ENCODE measurements at regions of chr17 and their contacts with region 1.

Region 1: DNA sequence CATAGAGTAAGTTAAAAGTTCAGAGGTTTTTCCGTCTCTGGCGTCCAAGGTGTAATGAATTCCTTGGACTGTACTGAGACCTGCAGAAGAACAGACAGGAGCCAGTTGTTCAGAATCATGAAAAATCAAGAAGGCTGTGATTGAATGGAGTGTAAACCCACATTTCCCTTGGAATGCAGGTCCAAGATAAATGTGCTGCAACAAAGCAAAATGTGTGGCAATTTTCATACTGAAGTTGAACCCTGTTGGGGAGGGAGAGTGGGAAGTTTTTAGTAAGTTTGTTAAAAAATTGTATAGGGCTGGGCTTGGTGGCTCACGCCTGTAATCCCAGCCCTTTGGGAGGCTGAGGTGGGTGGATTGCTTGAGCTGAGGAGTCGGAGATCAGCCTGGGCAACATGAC is 21.4 kb downstream of the GGNBP2 start:
- DNase-seq: no peak
- H3K4me3 Mint-ChIP-seq: no peak overlapping the region
- H3K27ac Mint-ChIP-seq: peak overlapping the region; percentile 27
- H3K4me1 Mint-ChIP-seq: no peaks in the 10 kb centered on the region
- H3K27me3 Mint-ChIP-seq: no peaks in the 10 kb centered on the region
- CTCF ChIP-seq: no peak

Region 2: DNA sequence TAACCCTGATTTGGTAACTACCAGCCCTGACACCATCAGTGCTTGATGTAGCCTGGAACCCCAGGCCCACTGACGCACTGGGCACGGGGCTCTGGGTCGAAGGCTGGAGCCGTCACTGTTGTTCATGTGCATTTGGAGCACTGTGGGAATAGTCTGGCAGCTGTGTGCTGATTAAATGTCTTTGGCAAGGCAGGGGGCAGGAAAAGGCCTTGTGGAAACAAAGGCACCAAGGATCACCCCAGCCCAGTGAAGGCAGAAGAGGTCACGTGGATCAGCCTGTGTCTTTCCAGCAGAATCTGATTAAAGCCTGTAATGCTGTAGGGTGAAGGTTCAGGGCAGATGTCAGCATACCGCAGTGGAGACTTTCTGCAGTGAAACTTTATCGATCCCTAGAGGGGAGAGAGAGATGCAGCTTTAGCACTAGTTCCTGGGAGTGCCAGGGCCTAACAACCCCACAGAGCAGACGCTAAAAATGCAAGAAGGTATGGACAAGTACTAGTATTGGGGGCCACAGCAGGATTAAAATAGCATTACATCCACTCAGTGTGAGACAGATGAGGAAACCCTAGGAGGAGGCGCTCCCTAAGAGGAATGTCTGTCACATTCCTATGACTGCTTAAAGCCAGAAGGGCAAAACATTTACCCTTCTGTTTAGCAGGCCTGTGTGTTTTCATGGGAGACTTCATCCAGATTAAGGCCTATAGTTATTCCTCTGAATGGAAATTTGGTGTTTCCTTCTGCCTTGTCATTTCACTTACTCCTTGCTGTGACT is 69.9 kb before region 1 on chr17:
- CTCF ChIA-PET with region 1: no interaction called
- intact Hi-C with region 1: no loop called
- DNase-seq: no peak
- H3K4me3 Mint-ChIP-seq: no peak overlapping the region
- H3K27ac Mint-ChIP-seq: no peak overlapping the region
- H3K4me1 Mint-ChIP-seq: no peaks in the 10 kb centered on the region
- H3K27me3 Mint-ChIP-seq: no peaks in the 10 kb centered on the region
- CTCF ChIP-seq: no peak

Region 3: GRCh38 chr17:36553459-36553858 is 12.6 kb before region 1 on chr17:
- CTCF ChIA-PET with region 1: no interaction called
- intact Hi-C with region 1: no loop called
- DNase-seq: no peak
- H3K4me3 Mint-ChIP-seq: no peak overlapping the region
- H3K27ac Mint-ChIP-seq: peak overlapping the region; percentile 9
- H3K4me1 Mint-ChIP-seq: peaks cover 30% of the 10 kb centered on the region
- H3K27me3 Mint-ChIP-seq: no peaks in the 10 kb centered on the region
- CTCF ChIP-seq: no peak

Region 4: DNA sequence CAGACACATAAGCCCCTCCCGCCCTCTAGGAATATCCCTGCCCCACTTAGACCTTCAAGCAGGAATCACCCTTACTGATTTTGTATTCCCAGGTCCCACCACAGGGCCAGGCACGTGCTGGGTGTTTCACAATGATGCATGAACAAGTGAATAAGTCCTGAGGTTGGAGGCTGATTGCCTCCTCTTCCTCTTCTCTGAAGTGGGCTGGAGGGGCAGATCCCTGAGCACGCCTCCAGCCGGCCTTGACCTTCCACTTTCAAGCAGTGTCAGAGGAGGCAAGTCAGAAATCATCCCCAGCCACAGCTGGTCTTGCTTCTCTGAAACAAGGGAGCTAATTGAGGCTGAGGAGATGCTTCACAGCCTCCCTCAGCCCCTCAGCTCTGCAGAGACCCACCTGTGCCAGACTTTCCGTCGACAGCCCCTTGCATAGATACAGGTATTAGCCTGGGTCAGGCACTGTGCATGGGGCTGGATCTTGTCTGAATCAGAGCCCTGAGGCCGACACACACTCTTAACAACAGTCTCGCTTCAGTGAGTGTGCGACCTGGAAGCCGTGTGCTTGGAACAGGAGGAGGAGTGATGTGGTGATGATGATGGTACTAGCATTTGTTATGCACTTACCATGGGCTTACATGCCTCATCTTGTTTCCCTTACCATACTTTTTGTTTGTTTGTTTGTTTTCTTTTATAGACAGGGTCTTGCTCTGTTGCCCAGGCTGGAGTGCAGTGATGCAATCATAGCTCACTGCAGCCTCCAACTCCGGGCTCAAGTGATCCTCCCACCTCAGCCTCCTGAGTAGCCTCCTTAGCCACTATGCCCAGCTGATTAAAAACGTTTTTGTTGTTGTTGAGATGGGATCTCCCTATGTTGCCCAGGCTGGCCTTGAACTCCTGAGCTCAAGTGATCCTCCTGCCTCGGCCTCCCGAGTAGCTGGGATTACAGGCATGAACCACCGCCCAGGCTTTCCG is 50.3 kb after region 1 on chr17:
- CTCF ChIA-PET with region 1: no interaction called
- intact Hi-C with region 1: no loop called
- DNase-seq: no peak
- H3K4me3 Mint-ChIP-seq: no peak overlapping the region
- H3K27ac Mint-ChIP-seq: no peak overlapping the region
- H3K4me1 Mint-ChIP-seq: peaks cover 7% of the 10 kb centered on the region
- H3K27me3 Mint-ChIP-seq: no peaks in the 10 kb centered on the region
- CTCF ChIP-seq: no peak

Region 5: DNA sequence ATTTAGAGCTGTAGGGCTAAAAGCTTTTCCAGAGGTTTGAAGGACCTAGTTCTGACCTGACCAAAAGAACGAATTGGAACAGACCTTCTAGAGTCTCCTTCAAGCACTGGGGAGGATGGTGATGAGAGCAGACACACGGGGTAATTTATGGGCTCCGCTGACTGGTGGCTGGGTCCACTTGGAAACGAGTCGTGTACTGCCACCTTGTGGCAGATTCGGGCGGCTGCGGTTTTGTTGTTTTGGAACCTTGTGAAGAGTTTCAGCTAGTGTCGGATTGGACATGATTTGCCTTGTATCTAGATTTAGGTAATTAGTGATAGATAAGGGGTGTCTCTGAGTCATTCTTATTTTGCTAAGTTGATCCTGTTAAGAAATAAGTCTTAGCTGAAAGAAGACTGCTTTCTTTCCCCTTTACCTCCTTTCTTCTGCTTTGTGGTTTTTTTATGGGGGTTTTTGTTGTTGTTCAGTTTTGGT is 481.6 kb after region 1 on chr17:
- CTCF ChIA-PET with region 1: no interaction called
- intact Hi-C with region 1: no loop called
- DNase-seq: peak; percentile 95
- H3K4me3 Mint-ChIP-seq: no peak overlapping the region
- H3K27ac Mint-ChIP-seq: no peak overlapping the region
- H3K4me1 Mint-ChIP-seq: peaks cover 7% of the 10 kb centered on the region
- H3K27me3 Mint-ChIP-seq: no peaks in the 10 kb centered on the region
- CTCF ChIP-seq: peak; percentile 100

Region 6: GRCh38 chr17:37219876-37220606 is 654.0 kb after region 1 on chr17:
- CTCF ChIA-PET with region 1: no interaction called
- intact Hi-C with region 1: loop called (anchors 5 kb)
- DNase-seq: no peak
- H3K4me3 Mint-ChIP-seq: no peak overlapping the region
- H3K27ac Mint-ChIP-seq: no peak overlapping the region
- H3K4me1 Mint-ChIP-seq: no peaks in the 10 kb centered on the region
- H3K27me3 Mint-ChIP-seq: no peaks in the 10 kb centered on the region
- CTCF ChIP-seq: no peak

Measured in Calu3 (cell line).